Right ventricle myocardium superior (tissue), 1 donor: ENCODE measurements at regions of chr3 and their contacts with region 1.

Region 1: GRCh38 chr3:15271785-15272400 is 60.5 kb downstream of the SH3BP5 start:
- DNase-seq: peak; percentile 74
- ATAC-seq: peak; percentile 32

Region 2: DNA sequence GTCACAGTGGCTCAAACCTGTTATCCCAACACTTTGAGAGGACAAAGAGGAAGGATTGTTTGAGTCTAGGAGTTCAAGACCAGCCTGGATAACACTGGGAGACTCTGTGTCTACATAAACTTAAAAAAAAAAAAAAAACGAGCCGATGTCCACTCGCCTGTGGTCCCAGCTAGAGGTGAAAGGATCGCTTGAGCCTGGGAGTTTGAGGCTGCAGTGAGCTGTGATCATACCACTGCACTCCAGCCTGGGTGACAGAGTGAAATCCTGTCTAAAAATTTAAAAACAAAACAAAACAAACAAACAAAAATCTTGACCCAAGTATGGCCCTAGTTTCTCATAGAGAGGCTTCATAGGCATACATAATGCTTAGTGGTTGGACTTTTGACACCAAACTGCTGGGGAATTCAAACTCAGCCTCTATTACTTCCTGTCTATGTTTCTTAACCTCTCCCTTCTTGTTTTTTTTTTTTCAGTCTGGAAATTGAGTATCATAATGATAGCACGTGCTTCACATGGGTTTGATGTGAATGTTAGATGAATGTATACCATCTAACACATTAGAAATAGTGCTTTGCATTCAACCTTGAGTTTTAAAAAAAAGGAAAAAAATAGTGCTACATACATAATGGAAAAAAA is 112.3 kb before region 1 on chr3:
- intact Hi-C with region 1: no loop called
- DNase-seq: no peak
- ATAC-seq: no peak

Region 3: DNA sequence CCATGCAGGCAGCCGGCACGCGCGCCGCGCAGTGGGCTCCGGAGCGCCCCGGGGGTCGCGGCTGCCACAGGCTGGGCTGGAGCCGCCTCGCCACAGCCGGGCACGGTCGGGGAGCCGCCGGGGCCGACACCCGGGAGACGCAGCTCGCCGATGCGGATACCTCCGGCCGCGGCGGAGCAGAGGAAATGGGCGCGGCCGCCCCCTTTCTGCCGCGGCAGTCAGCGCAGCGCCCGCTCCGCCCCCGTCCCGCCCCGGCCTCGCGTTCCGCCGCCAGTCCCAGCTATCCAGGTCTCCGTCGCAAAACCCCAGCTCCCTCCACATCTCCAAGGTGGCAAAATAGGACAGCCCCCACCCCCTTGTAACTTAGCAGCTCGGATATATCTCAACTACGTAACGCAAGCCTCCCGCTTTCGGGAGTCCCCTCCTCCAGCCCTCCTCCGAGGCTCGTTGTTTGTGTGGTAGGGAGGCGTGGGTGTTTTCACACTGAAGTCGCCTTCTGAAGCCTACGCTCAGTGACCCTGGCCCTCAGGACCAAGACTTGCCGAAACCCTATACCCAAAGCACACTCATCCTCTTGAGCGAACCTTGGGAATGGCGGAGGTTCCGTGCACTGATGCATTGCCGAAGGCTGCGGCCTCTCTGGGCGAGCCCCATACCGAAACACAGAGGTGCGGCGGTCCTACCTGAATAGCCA is 60.7 kb after region 1 on chr3 and contains the start of gene SH3BP5:
- intact Hi-C with region 1: loop called (anchors 5 kb)
- DNase-seq: peak; percentile 88
- ATAC-seq: peak; percentile 94
- total RNA-seq, gene SH3BP5: 10.4 TPM

Region 4: GRCh38 chr3:15367059-15367458 is 95.2 kb after region 1 on chr3:
- intact Hi-C with region 1: loop called (anchors 5 kb)
- DNase-seq: no peak
- ATAC-seq: no peak

Region 5: DNA sequence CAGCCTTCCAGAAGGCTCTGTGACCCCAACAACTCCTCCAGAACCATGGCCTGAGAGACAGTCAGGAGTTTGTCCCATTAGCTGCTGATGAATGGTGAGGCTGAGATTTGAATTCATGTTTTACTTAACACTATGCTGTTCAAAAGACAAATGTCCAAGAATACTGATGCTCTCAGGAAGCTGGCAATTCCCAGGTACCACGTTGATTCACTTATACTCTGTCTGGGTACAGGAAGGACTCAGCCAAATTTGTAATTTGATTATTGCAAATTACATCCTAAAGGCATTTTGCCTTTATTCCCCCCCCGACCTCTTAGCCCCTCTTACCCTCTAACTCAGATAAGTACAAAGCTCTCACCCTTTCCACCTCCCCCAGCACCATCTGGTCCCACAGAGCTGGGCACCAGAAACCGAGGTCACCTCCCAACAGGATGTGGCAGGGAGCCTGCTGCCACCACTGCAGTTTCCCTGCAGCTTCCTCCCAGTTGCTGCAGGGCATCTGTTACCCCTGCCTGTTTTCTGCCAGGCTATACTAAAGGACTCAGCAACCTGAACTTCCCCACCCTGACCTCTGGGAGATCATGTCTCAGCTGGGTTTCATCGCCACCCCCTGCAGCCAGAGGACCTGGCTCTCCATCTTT is 189.1 kb after region 1 on chr3:
- intact Hi-C with region 1: no loop called
- DNase-seq: no peak
- ATAC-seq: no peak